Ascending aorta (tissue), 2 donors: ENCODE measurements at regions of chr7 and their contacts with region 1.

Region 1: DNA sequence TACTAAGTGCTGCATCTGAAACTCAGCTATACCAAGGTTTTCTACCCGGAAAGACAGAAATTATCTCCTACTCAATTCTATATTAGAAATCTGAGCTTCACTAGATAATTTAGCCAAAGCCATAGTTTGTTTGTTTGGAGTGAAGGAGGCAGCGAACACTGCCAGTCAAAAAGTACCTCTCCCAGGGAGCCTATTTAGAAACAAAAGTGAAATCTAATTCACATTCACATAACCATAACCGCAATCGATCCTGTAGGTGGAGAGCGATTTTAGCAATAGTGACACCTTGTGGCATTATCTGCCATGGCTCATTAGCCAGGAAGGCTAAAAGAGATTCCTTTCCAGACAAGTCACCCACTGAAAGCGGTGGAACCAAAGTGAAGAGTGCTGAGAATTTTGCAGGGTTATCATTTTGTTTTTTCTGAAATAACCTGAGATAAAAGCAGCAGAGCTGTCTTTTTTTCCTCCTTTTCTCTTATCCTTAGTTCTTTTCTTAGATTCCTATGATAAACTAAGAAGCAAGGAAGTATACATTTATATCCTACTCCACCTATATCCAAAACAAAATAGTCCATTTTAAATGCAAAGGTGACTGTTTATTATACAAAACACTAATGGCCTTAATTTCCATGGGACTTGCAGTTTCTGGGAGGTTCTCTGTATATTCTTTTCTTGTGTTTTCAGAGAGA is 83.7 kb upstream of the BET1 start:
- DNase-seq: no peak
- H3K4me3 ChIP-seq: peak overlapping the region; percentile 39 to 46
- H3K27ac ChIP-seq: no peak overlapping the region
- H3K4me1 ChIP-seq: no peaks in the 10 kb centered on the region
- H3K27me3 ChIP-seq: no peaks in the 10 kb centered on the region
- CTCF ChIP-seq: peak; percentile 8 to 67 (median 54)

Region 2: DNA sequence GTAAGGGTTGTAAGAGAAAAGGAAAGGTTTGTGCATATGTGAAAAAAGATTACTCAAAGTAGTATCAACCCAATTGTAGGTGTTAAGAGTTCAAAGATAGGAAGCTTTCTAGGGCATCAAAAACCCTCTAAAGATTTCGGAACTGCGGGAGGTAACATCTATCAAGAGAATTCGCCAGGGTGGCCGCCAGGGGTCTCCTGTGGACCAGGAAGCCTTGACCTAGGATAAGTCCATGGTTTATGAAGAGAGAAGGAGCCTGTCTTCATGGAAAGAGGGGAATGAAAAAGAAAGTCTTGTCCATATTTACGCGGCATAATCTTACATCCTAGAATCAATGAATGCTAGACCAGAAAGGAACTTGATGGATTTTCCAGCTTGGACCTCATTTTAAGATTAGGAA is 372.6 kb before region 1 on chr7:
- intact Hi-C with region 1: loop called (anchors 5 kb)
- DNase-seq: no peak
- H3K4me3 ChIP-seq: no peak overlapping the region
- H3K27ac ChIP-seq: no peak overlapping the region
- H3K4me1 ChIP-seq: no peaks in the 10 kb centered on the region
- H3K27me3 ChIP-seq: no peaks in the 10 kb centered on the region
- CTCF ChIP-seq: peak in 1 of 3 experiments; percentile 42

Region 3: GRCh38 chr7:93799750-93800357 is 288.0 kb before region 1 on chr7:
- intact Hi-C with region 1: loop called (anchors 1 kb)
- DNase-seq: no peak
- H3K4me3 ChIP-seq: no peak overlapping the region
- H3K27ac ChIP-seq: no peak overlapping the region
- H3K4me1 ChIP-seq: no peaks in the 10 kb centered on the region
- H3K27me3 ChIP-seq: no peaks in the 10 kb centered on the region
- CTCF ChIP-seq: peak in 2 of 3 experiments; percentile 50 to 59

Region 4: GRCh38 chr7:93902777-93903423 is 184.9 kb before region 1 on chr7:
- intact Hi-C with region 1: loop called (anchors 5 kb)
- DNase-seq: no peak
- H3K4me3 ChIP-seq: no peak overlapping the region
- H3K27ac ChIP-seq: no peak overlapping the region
- H3K4me1 ChIP-seq: no peaks in the 10 kb centered on the region
- H3K27me3 ChIP-seq: no peaks in the 10 kb centered on the region
- CTCF ChIP-seq: peak; percentile 13 to 67 (median 42)